Activated CD4-positive, alpha-beta T cell treated with anti-CD3 and anti-CD28 coated beads, Interleukin-2, amount 10 ng/mL, durations not matched to agents 24 days and 14 days (primary cell): ENCODE measurements at regions of chr17 and their contacts with region 1.

Region 1: DNA sequence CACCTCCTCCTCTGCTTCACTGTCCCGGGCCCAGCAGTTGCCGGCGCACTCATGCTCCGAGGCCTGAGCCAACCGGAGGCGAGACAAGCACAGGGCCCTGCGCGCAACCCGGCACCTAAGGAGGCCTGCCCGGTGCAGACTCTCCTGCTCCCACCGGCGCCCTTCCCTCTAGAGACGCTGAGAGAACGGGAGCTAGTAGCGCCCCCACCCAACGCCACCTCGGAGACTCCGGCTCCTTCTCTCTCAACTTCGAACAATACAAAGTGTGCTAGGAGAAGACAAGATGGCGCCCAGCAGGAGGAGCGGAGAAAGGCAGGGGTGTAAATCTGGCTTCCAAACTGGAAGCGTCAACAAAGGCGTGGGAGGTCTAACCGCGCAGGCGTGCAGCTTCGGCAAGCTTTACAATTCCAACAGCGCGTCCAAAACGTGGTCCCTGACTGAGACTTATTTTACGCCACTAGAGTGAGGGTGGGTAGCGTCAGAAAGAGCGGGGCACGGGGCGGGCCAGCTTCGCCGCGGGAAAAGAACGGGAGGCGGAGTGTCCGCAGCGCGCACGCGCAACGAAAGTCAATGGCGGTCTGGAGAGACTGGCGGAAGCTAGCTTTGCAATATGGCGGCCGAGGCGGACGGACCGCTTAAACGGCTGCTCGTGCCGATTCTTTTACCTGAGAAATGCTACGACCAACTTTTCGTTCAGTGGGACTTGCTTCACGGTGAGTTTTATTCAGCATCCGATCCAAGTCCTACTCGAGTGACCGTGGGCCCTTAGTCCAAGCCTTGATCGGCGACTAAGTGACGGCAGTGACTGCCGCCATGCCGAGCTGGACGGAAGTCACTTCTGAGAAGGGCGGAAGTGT is at the start of gene MPDU1:
- DNase-seq: peak; percentile 99
- H3K4me3 Mint-ChIP-seq: peak within 1 kb of the TSS; percentile 89
- H3K27ac Mint-ChIP-seq: peak within 1 kb of the TSS; percentile 99
- H3K4me1 Mint-ChIP-seq: peaks cover 46% of the 10 kb centered on the region
- H3K27me3 Mint-ChIP-seq: no peaks in the 10 kb centered on the region
- total RNA-seq, gene MPDU1: 92.5 and 104 TPM in 2 replicates

Region 2: GRCh38 chr17:7548585-7549400 is 34.7 kb before region 1 on chr17 and contains the start of gene TNFSF12:
- intact Hi-C with region 1: no loop called
- DNase-seq: peak; percentile 89
- H3K4me3 Mint-ChIP-seq: peak within 1 kb of the TSS; percentile 83
- H3K27ac Mint-ChIP-seq: peak within 1 kb of the TSS; percentile 83
- H3K4me1 Mint-ChIP-seq: peaks cover 50% of the 10 kb centered on the region
- H3K27me3 Mint-ChIP-seq: no peaks in the 10 kb centered on the region
- total RNA-seq, gene TNFSF12: 21.5 and 21.8 TPM in 2 replicates

Region 3: DNA sequence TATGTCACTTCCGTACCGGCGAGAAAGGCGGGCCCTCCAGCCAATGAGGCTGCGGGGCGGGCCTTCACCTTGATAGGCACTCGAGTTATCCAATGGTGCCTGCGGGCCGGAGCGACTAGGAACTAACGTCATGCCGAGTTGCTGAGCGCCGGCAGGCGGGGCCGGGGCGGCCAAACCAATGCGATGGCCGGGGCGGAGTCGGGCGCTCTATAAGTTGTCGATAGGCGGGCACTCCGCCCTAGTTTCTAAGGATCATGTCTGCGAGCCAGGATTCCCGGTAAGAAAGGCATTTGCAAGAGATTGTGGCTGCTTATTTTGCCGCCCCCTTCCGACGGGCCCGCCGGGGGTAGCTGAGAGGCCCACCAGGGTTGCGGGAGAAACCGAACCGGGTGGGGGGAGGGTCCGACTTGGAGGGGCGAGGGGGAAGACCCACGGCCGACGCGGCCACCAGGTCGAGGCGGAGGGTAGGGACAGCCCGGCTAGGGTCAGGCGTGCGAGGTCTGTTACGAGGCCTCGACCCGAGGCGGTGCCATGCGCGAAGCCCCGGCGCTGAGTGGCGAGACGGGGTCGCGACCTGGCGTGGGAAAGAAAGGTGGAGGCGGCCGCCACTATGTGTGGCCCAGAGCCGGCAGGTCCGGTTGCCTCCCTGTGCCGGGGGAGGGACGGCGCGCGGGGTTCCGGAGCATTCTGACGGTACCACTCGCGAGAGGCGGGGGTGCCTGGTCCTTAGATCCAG is 10.7 kb before region 1 on chr17:
- intact Hi-C with region 1: loop called (anchors 1 kb)
- DNase-seq: peak; percentile 100
- H3K4me3 Mint-ChIP-seq: peak overlapping the region; percentile 95
- H3K27ac Mint-ChIP-seq: peak overlapping the region; percentile 100
- H3K4me1 Mint-ChIP-seq: peaks cover 55% of the 10 kb centered on the region
- H3K27me3 Mint-ChIP-seq: peaks cover 2% of the 10 kb centered on the region

Region 4: GRCh38 chr17:7614422-7615264 is 31.2 kb after region 1 on chr17 and contains the start of gene FXR2:
- intact Hi-C with region 1: loop called (anchors 1 kb)
- DNase-seq: peak; percentile 99
- H3K4me3 Mint-ChIP-seq: peak within 1 kb of the TSS; percentile 87
- H3K27ac Mint-ChIP-seq: peak within 1 kb of the TSS; percentile 91
- H3K4me1 Mint-ChIP-seq: peaks cover 33% of the 10 kb centered on the region
- H3K27me3 Mint-ChIP-seq: no peaks in the 10 kb centered on the region
- total RNA-seq, gene FXR2: 62.6 and 64.4 TPM in 2 replicates

Region 5: DNA sequence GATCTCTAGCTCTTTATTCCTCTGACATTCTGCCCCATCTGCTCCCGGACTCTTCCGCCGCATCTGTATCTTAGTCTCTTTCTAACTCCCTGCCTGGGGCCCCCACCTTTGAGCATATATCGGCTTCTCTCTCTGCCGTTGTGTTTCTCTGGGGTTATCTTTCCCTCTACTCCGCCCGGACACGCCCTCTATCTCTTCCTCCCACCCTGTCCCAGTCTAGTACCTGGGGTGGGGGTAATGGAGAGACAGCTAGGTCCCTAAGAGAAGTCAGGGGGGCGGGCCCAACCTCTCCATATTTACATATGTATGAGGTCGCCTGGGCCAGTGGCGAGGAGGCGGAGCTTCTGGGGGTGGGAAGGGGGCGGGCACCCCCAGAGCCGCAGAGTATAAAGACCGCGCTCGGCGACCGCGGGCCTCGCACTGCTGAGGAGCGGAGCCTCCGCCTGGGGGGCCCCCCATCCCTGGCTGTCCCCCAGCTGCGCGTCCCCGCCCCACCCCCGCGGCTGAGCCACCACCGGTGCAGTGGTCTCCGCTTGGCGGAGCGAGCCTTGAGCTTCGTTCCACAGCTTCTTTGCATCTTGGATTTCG is 67.1 kb after region 1 on chr17 and contains the start of gene ATP1B2:
- intact Hi-C with region 1: no loop called
- DNase-seq: peak; percentile 92
- H3K4me3 Mint-ChIP-seq: peak within 1 kb of the TSS; percentile 82
- H3K27ac Mint-ChIP-seq: peak within 1 kb of the TSS; percentile 23
- H3K4me1 Mint-ChIP-seq: peaks cover 15% of the 10 kb centered on the region
- H3K27me3 Mint-ChIP-seq: peaks cover 57% of the 10 kb centered on the region
- total RNA-seq, gene ATP1B2: 0.14 and 0.37 TPM in 2 replicates